Posterior cingulate gyrus (tissue), 11 donors: ENCODE measurements at regions of chr19 and their contacts with region 1.

Region 1: GRCh38 chr19:5023128-5023571 is 54.2 kb downstream of the KDM4B start:
- DNase-seq: peak in 2 of 10 donors; percentile 41 to 83

Region 2: DNA sequence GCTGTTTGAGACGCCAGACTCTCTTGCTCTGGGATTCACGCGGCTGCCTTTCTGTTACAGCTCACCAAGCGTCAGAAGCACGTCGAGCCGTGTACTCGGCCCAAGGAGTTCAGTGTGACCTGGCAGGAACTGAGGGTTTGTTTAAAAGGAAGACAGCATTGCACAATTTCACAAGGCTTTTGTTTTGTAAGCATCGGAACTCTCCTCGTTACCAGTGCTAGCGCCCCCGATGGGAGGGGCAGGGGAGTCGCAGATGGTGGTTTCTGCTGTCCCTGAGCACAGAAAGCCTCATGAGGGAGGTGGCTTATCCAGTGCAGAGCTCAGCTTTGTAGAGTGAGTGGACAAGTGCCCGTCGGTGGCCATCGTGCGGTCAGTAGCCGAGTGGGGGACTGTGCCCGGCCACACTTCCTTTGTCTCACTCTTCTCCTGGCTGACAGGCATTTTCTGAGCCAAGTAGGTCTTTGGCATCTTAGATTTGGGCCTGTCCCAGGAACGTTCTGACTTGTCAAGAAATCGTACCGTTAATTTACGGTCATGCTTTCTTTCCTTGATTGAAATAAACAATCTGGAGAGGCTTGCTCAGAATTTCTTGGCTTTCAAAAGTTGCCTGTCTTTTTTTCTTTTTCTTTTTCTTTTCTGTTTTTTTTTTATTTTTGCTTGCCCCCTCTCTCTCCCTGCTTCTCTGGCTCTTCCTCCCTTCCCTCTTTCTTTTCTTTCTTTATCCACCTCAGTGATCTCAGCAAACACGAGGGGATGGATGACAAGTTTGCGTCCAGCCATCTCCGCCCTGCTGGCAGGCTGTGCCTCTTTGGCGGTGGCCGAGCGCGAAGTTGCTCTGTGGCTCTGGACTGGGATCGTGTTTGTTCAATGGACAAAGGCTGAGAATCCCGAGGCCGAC is 46.5 kb before region 1 on chr19:
- intact Hi-C with region 1: loop called (anchors 5 kb)
- DNase-seq: peak in 6 of 10 donors; percentile 37 to 86 (median 56)

Region 3: GRCh38 chr19:5074407-5074806 is 51.3 kb after region 1 on chr19:
- intact Hi-C with region 1: no loop called
- DNase-seq: no peak